Endothelial cell of umbilical vein (primary cell): ENCODE measurements at regions of chr2 and their contacts with region 1.

Region 1: GRCh38 chr2:135913727-135914365 is 37.6 kb upstream of the MCM6 start:
- DNase-seq: peak; percentile 59
- H3K4me3 ChIP-seq: no peak overlapping the region
- H3K27ac ChIP-seq: no peak overlapping the region
- H3K4me1 ChIP-seq: peaks cover 10% of the 10 kb centered on the region
- H3K27me3 ChIP-seq: no peaks in the 10 kb centered on the region
- CTCF ChIP-seq: peak; percentile 45 to 52
- POLR2A ChIP-seq: no peak

Region 2: DNA sequence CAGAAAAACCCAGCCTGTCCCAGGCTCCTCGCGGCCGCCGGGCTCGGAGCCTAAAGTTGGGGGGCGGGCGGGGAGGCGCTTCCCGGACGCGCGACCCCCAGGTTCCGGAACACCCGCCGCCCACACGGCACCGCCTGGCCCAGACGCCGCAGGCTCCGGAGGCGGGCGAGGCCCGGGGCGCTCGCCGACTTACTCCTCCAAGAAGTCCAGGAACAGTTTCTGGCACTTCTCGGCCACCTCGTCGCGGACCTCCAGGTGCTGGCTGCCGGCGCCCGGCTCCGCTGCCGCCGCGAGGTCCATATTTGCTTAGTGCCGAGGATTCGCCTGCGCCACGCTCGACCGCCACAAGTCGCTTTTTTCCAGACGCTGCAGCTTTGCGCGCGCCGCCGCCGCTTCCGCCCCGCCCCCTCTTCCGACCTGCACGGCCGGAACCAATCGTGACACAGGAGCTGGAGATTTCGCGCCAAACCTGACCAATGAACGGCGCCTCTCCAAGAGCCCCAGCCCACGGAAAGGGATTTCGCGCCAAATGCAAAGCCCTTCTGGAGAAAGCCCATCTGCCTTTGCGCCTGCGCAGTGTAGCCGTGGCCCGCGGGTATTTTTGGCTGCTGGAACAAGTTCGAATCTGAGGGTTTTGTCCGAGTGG is 37.7 kb before region 1 on chr2 and contains the start of gene MCM6:
- CTCF ChIA-PET with region 1: interaction called, 4 read pairs
- POLR2A ChIA-PET with region 1: no interaction called
- dilution Hi-C with region 1: no loop called
- intact Hi-C with region 1: loop called (anchors 5 kb)
- DNase-seq: peak; percentile 99
- H3K4me3 ChIP-seq: peak within 1 kb of the TSS; percentile 75 to 83 (median 76)
- H3K27ac ChIP-seq: peak within 1 kb of the TSS; percentile 58
- H3K4me1 ChIP-seq: peaks cover 5% of the 10 kb centered on the region
- H3K27me3 ChIP-seq: no peaks in the 10 kb centered on the region
- CTCF ChIP-seq: no peak
- POLR2A ChIP-seq: peak; percentile 26
- total RNA-seq, gene MCM6: 48.1 and 52.6 TPM in 2 replicates

Region 3: GRCh38 chr2:136013955-136014354 is 100.1 kb after region 1 on chr2:
- CTCF ChIA-PET with region 1: no interaction called
- POLR2A ChIA-PET with region 1: no interaction called
- dilution Hi-C with region 1: no loop called
- intact Hi-C with region 1: loop called (anchors 5 kb)
- DNase-seq: peak; percentile 74
- H3K4me3 ChIP-seq: no peak overlapping the region
- H3K27ac ChIP-seq: no peak overlapping the region
- H3K4me1 ChIP-seq: no peaks in the 10 kb centered on the region
- H3K27me3 ChIP-seq: peaks cover 15 to 22% of the 10 kb centered on the region in 2 experiments
- CTCF ChIP-seq: no peak
- POLR2A ChIP-seq: no peak

Region 4: GRCh38 chr2:136238286-136239078 is 324.6 kb after region 1 on chr2:
- CTCF ChIA-PET with region 1: interaction called, 9 read pairs
- POLR2A ChIA-PET with region 1: no interaction called
- dilution Hi-C with region 1: no loop called
- intact Hi-C with region 1: loop called (anchors 1 kb)
- DNase-seq: peak; percentile 89
- H3K4me3 ChIP-seq: no peak overlapping the region
- H3K27ac ChIP-seq: peak overlapping the region; percentile 96
- H3K4me1 ChIP-seq: peaks cover 70% of the 10 kb centered on the region
- H3K27me3 ChIP-seq: no peaks in the 10 kb centered on the region
- CTCF ChIP-seq: no peak
- POLR2A ChIP-seq: peak; percentile 58

Region 5: GRCh38 chr2:136423516-136423996 is 509.7 kb after region 1 on chr2:
- CTCF ChIA-PET with region 1: interaction called, 12 read pairs
- POLR2A ChIA-PET with region 1: no interaction called
- dilution Hi-C with region 1: no loop called
- intact Hi-C with region 1: loop called (anchors 1 kb)
- DNase-seq: peak; percentile 58
- H3K4me3 ChIP-seq: peak overlapping the region in 1 of 3 experiments; percentile 17
- H3K27ac ChIP-seq: no peak overlapping the region
- H3K4me1 ChIP-seq: no peaks in the 10 kb centered on the region
- H3K27me3 ChIP-seq: peaks cover 5 to 6% of the 10 kb centered on the region in 2 experiments
- CTCF ChIP-seq: peak; percentile 80 to 87
- POLR2A ChIP-seq: no peak